Vagina (tissue), 2 donors: ENCODE measurements at regions of chr17 and their contacts with region 1.

Region 1: GRCh38 chr17:63325808-63326207 is 120.3 kb downstream of the CYB561 start:
- DNase-seq: no peak
- H3K4me3 ChIP-seq: no peak overlapping the region
- H3K27ac ChIP-seq: no peak overlapping the region
- H3K4me1 ChIP-seq: no peaks in the 10 kb centered on the region
- H3K27me3 ChIP-seq: no peaks in the 10 kb centered on the region
- CTCF ChIP-seq: no peak
- POLR2A ChIP-seq: no peak

Region 2: DNA sequence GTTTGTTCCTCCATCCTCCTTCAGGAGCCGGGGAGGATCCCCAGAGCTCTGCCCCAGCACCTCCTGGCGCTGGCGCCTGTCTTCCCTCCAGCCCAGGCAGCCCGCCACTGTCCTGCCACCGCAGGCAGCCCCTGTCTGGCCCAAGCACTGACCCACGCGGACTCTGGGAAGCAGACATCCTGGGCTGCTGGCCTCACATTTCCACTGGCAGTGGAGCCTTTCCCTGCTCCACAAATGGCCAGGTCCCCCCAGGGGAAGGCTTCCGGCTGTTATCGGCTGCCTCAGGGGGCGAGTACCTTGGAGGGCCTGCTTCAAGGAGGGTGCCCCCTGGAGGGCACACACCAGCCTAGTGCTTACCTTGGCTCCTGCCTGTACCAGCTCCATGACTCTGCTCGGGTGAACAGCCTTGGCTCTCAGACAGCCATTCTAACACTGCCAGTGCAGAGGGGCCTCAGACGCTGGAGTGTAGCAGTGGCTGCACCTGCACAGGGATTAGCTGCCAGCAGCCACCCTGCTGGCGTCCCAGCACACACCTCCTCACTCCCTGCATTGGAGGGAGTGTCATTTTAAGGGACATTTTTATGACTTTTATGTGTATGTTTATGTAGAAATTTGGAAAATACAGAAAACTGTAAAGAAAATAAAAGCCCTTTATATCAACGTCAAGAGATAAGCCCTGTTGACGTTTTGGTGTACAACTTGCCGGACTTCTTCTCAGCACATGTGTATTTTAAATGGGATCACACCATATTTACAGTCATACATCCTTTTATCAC is 172.1 kb after region 1 on chr17:
- intact Hi-C with region 1: no loop called
- DNase-seq: no peak
- H3K4me3 ChIP-seq: no peak overlapping the region
- H3K27ac ChIP-seq: no peak overlapping the region
- H3K4me1 ChIP-seq: no peaks in the 10 kb centered on the region
- H3K27me3 ChIP-seq: no peaks in the 10 kb centered on the region
- CTCF ChIP-seq: no peak
- POLR2A ChIP-seq: no peak

Region 3: GRCh38 chr17:63571763-63572271 is 246.0 kb after region 1 on chr17:
- intact Hi-C with region 1: loop called (anchors 5 kb)
- DNase-seq: no peak
- H3K4me3 ChIP-seq: no peak overlapping the region
- H3K27ac ChIP-seq: no peak overlapping the region
- H3K4me1 ChIP-seq: no peaks in the 10 kb centered on the region
- H3K27me3 ChIP-seq: no peaks in the 10 kb centered on the region
- CTCF ChIP-seq: no peak
- POLR2A ChIP-seq: no peak